ENCODE measurements at regions of chr10 and their contacts with region 1.

Region 1: DNA sequence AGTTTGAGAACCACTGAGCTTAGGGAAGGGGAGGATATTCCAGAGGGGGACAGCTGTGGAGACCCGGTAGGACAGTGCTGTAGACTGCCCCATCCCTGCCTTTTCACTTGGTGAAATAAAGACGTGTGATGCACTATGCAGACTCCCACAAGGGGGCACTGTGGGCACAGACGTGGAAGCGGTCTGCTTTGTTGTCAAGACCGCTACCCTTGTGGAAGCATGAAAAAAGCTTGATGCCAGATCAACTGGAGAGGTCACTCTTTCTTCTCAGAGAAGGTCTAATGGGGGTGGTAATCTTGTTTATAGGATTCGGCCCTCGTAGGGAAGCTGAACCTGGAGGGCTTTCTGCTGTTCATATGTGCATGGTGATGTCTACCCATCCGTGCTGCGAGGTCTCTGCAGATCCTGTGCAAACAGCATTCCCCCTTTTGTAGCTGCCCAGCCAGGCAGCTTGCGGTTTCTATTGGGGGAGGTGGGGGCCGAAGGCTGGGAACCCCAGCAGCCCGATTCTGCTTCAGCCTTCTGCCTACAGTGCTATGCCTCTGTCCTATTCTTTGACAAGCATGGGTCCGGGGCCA is 13.7 kb downstream of the RPS24 start:
- DNase-seq: peak; percentile 79
- H3K4me3 Mint-ChIP-seq: no peak overlapping the region
- H3K27ac Mint-ChIP-seq: no peak overlapping the region
- H3K4me1 Mint-ChIP-seq: peaks cover 13% of the 10 kb centered on the region
- H3K27me3 Mint-ChIP-seq: no peaks in the 10 kb centered on the region
- CTCF ChIP-seq: peak; percentile 81

Region 2: DNA sequence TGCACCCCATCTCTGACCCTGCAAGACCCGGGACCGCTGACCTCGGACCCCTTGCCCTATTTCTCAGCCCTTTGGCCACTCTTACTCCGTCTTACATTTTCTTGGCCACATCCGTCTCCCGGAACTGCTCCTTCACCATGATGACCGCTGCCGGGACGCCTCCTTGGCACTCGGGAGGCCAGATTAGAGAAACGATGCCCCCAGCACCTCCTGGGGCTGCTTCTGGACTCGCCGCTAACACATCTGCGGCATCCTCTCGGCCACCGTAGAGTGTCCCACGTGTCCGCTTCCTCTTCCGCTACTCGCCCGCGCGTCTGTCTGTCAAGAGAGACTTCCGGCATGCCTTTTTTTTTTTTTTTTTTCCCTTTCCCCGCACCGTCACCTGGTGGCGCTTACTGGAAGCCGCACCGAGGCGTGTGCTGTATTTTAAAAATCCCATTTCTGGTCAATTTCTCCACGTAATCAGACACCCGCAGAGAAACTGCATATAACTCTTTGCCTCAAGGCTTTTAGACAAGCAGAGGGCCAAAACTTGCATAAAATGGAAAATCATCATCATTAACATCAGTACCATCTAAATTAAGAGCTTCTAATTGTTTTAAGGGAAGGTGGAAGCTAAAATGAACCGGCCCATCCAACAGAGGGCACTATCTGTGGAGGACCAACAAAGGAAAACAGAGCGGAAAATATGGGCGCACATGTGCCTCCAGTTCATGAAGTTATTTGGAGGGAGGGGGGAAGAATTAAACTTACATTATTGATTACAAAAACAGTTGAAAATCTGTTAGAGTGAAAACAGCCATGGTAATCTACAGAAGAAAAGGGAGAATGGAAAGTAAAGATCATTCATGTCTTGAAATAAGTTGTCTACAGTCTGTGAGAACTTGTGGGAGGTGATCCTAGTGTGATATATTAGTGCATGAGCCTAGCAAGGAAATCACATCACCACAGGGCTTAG is 17.9 kb before region 1 on chr10 and contains the start of gene POLR3A:
- CTCF ChIA-PET with region 1: interaction called, 12 read pairs
- POLR2A ChIA-PET with region 1: interaction called, 9 read pairs
- intact Hi-C with region 1: no loop called
- DNase-seq: peak; percentile 95
- H3K4me3 Mint-ChIP-seq: peak within 1 kb of the TSS; percentile 95
- H3K27ac Mint-ChIP-seq: peak within 1 kb of the TSS; percentile 93
- H3K4me1 Mint-ChIP-seq: peaks cover 37% of the 10 kb centered on the region
- H3K27me3 Mint-ChIP-seq: no peaks in the 10 kb centered on the region
- CTCF ChIP-seq: peak; percentile 43
- total RNA-seq, gene POLR3A: 19.1 and 19.8 TPM in 2 replicates

Region 3: DNA sequence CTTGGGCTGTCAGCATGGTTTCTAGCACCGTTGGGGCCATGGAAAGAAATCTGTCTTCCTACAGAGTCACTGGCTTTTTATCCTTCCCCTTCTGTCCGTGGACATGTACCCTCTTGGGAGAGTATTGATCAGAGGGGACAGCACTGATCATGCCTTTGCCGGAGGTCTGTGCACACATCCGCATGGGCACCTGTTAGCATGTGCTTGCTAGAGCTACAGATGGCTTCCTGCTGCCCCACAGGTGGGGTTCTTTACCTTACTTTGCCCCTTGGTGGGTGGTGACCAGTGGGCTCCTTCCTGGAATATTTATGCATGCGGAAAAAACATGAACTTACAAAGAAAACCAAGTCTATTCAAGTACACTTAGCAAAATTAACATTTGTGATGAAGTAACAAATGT is 11.2 kb after region 1 on chr10:
- CTCF ChIA-PET with region 1: interaction called, 25 read pairs
- POLR2A ChIA-PET with region 1: no interaction called
- intact Hi-C with region 1: no loop called
- DNase-seq: no peak
- H3K4me3 Mint-ChIP-seq: no peak overlapping the region
- H3K27ac Mint-ChIP-seq: no peak overlapping the region
- H3K4me1 Mint-ChIP-seq: no peaks in the 10 kb centered on the region
- H3K27me3 Mint-ChIP-seq: peaks cover 24% of the 10 kb centered on the region
- CTCF ChIP-seq: no peak

Region 4: GRCh38 chr10:78302989-78303854 is 255.8 kb after region 1 on chr10:
- CTCF ChIA-PET with region 1: interaction called, 4 read pairs
- POLR2A ChIA-PET with region 1: no interaction called
- intact Hi-C with region 1: loop called (anchors 1 kb)
- DNase-seq: peak; percentile 91
- H3K4me3 Mint-ChIP-seq: peak overlapping the region; percentile 90
- H3K27ac Mint-ChIP-seq: peak overlapping the region; percentile 75
- H3K4me1 Mint-ChIP-seq: no peaks in the 10 kb centered on the region
- H3K27me3 Mint-ChIP-seq: peaks cover 33% of the 10 kb centered on the region
- CTCF ChIP-seq: peak; percentile 43

Region 5: DNA sequence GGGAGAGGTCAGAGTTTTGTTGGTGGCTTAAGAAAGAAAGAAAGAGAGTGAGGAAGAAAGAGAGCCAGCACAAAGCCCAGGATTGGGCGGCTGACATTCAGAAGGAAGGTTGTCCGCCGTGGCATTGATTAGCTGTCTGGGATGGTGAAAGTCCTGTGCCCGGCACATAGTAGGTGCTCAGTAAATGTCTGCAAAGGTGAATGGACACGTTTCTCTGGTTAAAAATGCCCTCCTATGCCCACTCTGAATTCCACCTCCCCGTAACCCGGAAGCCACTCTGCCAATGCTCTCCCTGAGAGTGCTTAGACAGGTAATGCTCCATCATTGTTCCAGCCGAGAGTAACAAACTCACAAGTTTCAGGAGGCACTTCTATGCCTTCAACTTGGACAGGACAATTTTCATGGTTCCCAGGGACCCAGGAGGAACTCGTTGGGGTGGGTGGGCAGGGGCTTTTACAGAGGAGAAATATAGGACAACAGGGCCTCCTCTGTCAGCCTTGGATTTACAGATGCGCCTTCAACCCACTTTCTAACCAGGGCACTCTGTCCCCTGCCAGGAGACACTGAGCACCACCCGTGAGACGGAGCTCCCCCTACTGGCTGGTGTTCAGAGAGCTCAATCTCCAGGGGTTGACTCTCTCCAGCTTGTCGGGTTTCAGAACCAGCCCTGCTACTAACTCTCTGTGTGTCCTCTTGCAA is 609.9 kb after region 1 on chr10:
- CTCF ChIA-PET with region 1: no interaction called
- POLR2A ChIA-PET with region 1: no interaction called
- intact Hi-C with region 1: loop called (anchors 10 kb)
- DNase-seq: peak; percentile 76
- H3K4me3 Mint-ChIP-seq: no peak overlapping the region
- H3K27ac Mint-ChIP-seq: no peak overlapping the region
- H3K4me1 Mint-ChIP-seq: no peaks in the 10 kb centered on the region
- H3K27me3 Mint-ChIP-seq: peaks cover 41% of the 10 kb centered on the region
- CTCF ChIP-seq: peak; percentile 64